Pancreas (tissue), 10 donors: ENCODE measurements at regions of chrX and their contacts with region 1.

Region 1: DNA sequence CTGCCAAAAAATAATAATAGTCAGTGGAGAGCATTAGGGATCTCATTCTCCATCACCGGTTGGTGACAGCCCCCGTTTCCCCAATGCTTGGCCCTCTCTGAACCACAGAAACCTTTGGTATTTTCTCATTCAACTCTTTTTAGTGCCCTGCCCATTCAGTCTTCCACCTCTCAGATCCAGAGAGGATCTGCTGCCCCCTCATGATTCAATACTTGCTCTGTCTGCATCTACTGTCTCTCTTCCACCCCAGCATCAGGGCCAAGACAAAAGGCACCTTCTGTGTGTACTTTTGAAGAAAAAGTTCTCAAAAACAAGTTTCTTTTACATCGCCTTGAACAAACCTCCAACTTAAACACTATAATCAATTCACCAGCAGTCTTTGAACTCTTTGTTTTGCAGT is 19.3 kb downstream of the CLTRN start:
- DNase-seq: no peak
- ATAC-seq: no peak
- H3K4me3 ChIP-seq: no peak overlapping the region
- H3K27ac ChIP-seq: no peak overlapping the region
- H3K4me1 ChIP-seq: no peaks in the 10 kb centered on the region
- H3K27me3 ChIP-seq: peaks cover 0 to 13% (median 0%) of the 10 kb centered on the region in 4 donors
- CTCF ChIP-seq: no peak

Region 2: GRCh38 chrX:15579778-15580747 is 65.2 kb before region 1 on chrX:
- intact Hi-C with region 1: loop called in 1 of 3 experiments (anchors 10 kb)
- DNase-seq: peak in 5 of 6 donors; percentile 5 to 53 (median 18)
- ATAC-seq: peak; percentile 85 to 92 (median 90)
- H3K4me3 ChIP-seq: no peak overlapping the region
- H3K27ac ChIP-seq: no peak overlapping the region
- H3K4me1 ChIP-seq: peaks cover 0 to 8% (median 0%) of the 10 kb centered on the region in 3 donors
- H3K27me3 ChIP-seq: peaks cover 0 to 12% (median 2%) of the 10 kb centered on the region in 4 donors
- CTCF ChIP-seq: no peak

Region 3: DNA sequence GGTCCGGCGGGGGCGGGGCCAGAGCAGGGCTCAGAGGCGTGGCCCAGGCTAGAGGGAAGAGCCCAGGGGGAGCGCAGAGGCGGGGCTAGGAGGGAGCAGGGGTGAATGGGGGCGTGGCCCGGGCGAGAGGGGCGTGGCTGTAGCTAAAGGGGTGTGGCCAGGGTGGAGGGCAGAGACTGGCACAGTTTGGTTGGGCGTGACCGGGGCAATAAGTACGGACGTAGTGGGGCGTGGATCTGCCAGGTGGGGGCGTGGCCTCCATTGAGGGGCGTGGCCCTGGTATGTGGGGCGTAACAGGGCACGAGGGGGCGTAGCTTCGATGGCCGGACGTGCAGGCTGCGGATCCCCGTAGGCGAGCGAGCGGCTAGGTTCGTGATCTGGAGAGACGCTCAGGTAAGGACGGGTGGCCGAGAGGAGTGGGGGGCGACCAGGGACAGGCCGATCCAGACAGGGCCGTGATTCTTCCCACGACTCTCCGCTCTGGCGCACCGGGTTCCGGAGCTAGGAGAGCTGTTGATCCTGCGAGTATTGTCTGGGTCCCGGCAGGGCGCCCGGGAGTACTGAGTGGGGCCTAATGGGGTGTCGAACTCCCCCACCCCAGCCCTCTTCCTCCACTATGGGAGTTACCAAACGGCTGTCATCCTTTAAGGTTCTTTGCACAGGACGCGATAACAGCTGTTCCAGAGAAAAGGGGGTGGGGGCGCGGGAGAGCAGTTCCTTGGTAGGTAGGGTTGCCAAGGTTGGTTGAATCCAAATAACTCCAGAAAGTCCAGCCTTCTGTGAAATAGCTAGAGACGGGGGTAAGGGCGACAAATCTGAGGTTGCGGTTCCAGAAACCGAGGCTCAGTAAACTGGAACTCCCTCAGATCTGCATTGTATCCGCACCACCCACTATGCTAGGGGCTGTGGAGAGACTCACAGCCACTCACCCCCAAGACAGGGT is 93.0 kb after region 1 on chrX and contains the start of gene CA5B:
- intact Hi-C with region 1: no loop called
- DNase-seq: peak; percentile 92 to 100 (median 99)
- ATAC-seq: peak; percentile 95 to 98 (median 96)
- H3K4me3 ChIP-seq: peak within 1 kb of the TSS; percentile 29 to 60 (median 59)
- H3K27ac ChIP-seq: peak within 1 kb of the TSS in 3 of 4 donors; percentile 18 to 66 (median 64)
- H3K4me1 ChIP-seq: peaks cover 0 to 6% (median 0%) of the 10 kb centered on the region in 3 donors
- H3K27me3 ChIP-seq: no peaks in the 10 kb centered on the region
- CTCF ChIP-seq: no peak
- total RNA-seq, gene CA5B: 3.7 to 7.9 (median 5.2) TPM